ENCODE measurements at regions of chr12 and their contacts with region 1.

Region 1: GRCh38 chr12:49967042-49967776 is 5.5 kb downstream of the AQP5 start:
- DNase-seq: peak; percentile 85 to 92 (median 90)
- H3K4me3 ChIP-seq: peak overlapping the region in 6 of 7 experiments; percentile 33 to 72 (median 56)
- H3K27ac ChIP-seq: no peak overlapping the region
- H3K4me1 ChIP-seq: peaks cover 0 to 32% (median 28%) of the 10 kb centered on the region in 4 experiments
- H3K27me3 ChIP-seq: peaks cover 0 to 50% (median 17%) of the 10 kb centered on the region in 5 experiments

Region 2: GRCh38 chr12:49905718-49906314 is 61.4 kb before region 1 on chr12:
- CTCF ChIA-PET with region 1: interaction called, 11 read pairs
- POLR2A ChIA-PET with region 1: no interaction called
- DNase-seq: no peak
- H3K4me3 ChIP-seq: no peak overlapping the region
- H3K27ac ChIP-seq: no peak overlapping the region
- H3K4me1 ChIP-seq: peaks cover 0 to 12% (median 5%) of the 10 kb centered on the region in 4 experiments
- H3K27me3 ChIP-seq: peaks cover 0 to 36% (median 20%) of the 10 kb centered on the region in 5 experiments

Region 3: DNA sequence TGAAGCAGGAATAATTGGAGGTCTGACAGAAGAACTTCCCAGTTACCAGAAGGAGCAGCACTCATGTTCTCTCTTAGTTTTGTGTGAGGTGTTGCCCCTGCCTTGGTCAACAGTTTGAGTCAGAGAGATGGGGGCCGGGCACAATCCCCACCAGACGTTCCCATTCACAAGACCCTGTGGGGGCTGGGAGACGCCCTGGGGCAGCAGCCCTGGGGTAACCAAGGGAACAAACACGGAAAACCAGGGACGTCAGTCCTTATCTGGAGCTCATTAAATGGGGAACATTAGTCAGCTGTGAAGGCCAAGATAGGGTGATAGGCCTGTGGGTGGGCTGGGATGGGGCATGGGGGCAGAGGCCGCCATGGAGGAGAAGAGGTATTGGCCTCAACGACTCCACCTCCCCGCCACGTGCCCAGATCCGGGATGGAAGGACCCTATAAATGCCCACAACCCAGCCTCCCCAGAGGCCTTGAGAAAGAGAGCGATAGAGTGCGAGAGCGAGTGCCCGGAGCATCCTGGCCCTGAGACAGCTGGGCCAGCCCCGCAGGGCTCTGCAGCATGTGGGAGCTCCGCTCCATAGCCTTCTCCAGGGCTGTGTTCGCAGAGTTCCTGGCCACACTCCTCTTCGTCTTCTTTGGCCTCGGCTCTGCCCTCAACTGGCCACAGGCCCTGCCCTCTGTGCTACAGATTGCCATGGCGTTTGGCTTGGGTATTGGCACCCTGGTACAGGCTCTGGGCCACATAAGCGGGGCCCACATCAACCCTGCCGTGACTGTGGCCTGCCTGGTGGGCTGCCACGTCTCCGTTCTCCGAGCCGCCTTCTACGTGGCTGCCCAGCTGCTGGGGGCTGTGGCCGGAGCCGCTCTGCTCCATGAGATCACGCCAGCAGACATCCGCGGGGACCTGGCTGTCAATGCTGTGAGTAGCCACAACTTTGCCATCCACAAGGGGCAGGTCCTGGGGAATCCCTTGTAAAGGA is 16.6 kb before region 1 on chr12 and contains the start of gene AQP2:
- CTCF ChIA-PET with region 1: interaction called, 44 read pairs
- POLR2A ChIA-PET with region 1: no interaction called
- DNase-seq: no peak
- H3K4me3 ChIP-seq: no peak within 1 kb of the TSS
- H3K27ac ChIP-seq: no peak within 1 kb of the TSS
- H3K4me1 ChIP-seq: peaks cover 0 to 10% (median 7%) of the 10 kb centered on the region in 4 experiments
- H3K27me3 ChIP-seq: peaks cover 0 to 97% (median 54%) of the 10 kb centered on the region in 5 experiments

Region 4: DNA sequence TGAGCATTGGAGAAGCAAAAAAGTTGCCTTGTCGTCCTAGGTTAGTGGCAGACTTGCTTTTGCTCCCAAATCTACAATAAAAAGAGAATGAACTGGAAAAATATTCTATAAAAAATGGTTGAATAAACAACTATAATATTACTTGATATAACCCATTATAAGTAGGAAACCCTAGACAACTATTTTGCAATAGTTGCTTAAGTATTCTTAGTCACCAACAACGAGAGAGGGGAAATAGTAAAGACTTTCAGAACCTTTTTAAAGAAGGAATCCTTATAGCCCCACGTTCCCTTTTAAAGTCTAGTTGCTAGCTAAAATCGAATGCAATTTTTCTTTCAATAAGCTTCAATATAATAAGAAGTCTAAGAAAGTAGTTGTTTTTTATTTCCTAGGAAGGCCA is 23.1 kb after region 1 on chr12:
- CTCF ChIA-PET with region 1: interaction called, 139 read pairs
- POLR2A ChIA-PET with region 1: no interaction called
- DNase-seq: no peak
- H3K4me3 ChIP-seq: no peak overlapping the region
- H3K27ac ChIP-seq: no peak overlapping the region
- H3K4me1 ChIP-seq: no peaks in the 10 kb centered on the region
- H3K27me3 ChIP-seq: no peaks in the 10 kb centered on the region

Region 5: GRCh38 chr12:50017641-50018040 is 50.4 kb after region 1 on chr12:
- CTCF ChIA-PET with region 1: interaction called, 20 read pairs
- POLR2A ChIA-PET with region 1: no interaction called
- DNase-seq: no peak
- H3K4me3 ChIP-seq: no peak overlapping the region
- H3K27ac ChIP-seq: no peak overlapping the region
- H3K4me1 ChIP-seq: peaks cover 0 to 4% (median 0%) of the 10 kb centered on the region in 4 experiments
- H3K27me3 ChIP-seq: no peaks in the 10 kb centered on the region

Region 6: DNA sequence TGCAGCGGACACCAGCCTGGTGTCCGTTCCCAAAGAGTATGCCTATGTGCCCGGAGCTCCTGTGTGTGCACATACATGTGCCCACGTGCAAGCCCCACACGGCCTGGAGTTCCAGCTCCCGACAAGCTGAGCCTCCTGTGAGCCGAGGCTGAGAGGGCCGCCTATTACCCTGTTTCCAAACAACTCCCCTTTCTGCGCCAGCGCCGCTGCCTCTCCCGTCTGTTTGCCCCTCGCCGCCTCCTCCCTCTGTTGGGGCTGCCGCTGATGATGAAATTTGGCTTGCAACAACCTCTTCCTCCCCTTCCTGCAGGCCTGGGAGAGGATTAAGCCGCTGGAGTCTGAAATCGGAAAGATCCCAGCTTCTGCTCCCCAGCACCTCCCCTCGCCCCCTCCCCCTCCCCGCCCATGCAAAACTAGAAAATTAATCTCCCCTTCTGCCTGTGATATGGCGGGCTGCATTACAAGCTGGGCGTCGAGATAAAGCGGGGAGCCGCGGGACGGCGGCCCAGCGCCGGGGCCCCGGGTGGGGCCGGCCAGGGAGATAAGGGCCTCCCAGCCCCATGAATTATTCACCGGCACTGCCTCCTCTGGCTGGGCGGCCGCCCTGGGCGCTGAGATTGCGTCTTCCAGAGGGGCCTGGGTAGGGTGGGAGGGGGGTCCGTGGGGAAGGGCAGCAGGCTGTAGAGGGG is 83.3 kb after region 1 on chr12:
- CTCF ChIA-PET with region 1: interaction called, 72 read pairs
- POLR2A ChIA-PET with region 1: interaction called, 3 read pairs
- DNase-seq: peak; percentile 89 to 96 (median 93)
- H3K4me3 ChIP-seq: peak overlapping the region in 4 of 7 experiments; percentile 44 to 74 (median 62)
- H3K27ac ChIP-seq: peak overlapping the region in 1 of 2 experiments; percentile 34
- H3K4me1 ChIP-seq: peaks cover 2 to 29% (median 26%) of the 10 kb centered on the region in 4 experiments
- H3K27me3 ChIP-seq: peaks cover 0 to 24% (median 0%) of the 10 kb centered on the region in 5 experiments

Region 7: GRCh38 chr12:50074936-50075807 is 108.0 kb after region 1 on chr12:
- CTCF ChIA-PET with region 1: interaction called, 209 read pairs
- POLR2A ChIA-PET with region 1: no interaction called
- DNase-seq: peak; percentile 71 to 79 (median 72)
- H3K4me3 ChIP-seq: no peak overlapping the region
- H3K27ac ChIP-seq: no peak overlapping the region
- H3K4me1 ChIP-seq: peaks cover 0 to 19% (median 0%) of the 10 kb centered on the region in 4 experiments
- H3K27me3 ChIP-seq: peaks cover 0 to 6% (median 3%) of the 10 kb centered on the region in 5 experiments

Region 8: DNA sequence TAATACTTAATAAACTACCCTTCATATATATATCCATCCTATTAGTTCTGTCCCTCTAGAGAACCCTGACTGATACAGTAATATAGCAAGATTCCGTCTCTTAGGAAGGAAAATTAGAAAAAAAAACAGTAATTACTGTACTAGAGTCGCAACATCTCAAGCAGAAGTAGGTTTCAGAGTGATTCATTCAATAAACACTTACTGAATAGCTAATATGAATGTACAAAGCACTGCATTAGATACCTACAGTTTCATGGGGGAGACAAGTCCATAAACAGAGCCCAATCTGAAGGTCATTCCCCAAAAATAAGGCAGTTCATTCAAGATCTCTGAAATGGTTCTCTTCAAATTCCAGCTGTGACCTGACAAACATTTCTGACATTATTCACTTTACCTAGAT is 190.1 kb after region 1 on chr12:
- CTCF ChIA-PET with region 1: no interaction called
- POLR2A ChIA-PET with region 1: no interaction called
- DNase-seq: no peak
- H3K4me3 ChIP-seq: no peak overlapping the region
- H3K27ac ChIP-seq: no peak overlapping the region
- H3K4me1 ChIP-seq: peaks cover 0 to 3% (median 0%) of the 10 kb centered on the region in 4 experiments
- H3K27me3 ChIP-seq: no peaks in the 10 kb centered on the region

Region 9: DNA sequence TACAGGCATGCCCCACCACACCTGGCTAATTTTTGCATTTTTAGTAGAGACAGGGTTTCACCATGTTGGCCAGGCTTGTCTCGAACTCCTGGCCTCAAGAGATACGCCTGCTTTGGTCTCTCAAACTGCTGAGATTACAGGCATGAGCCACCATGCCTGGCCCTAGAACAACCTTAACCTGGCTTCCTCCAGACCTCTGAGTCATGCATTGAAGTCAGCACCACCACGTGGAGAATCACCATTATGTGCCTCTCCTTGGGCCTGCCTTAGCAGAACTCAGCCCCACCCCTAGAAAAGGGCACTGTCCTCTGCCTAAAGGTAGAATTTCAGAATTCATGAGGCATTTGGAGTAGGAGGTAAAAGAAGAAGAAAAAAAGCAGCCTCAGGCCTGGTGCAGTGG is 267.1 kb after region 1 on chr12:
- CTCF ChIA-PET with region 1: no interaction called
- POLR2A ChIA-PET with region 1: no interaction called
- DNase-seq: no peak
- H3K4me3 ChIP-seq: no peak overlapping the region
- H3K27ac ChIP-seq: no peak overlapping the region
- H3K4me1 ChIP-seq: peaks cover 0 to 3% (median 0%) of the 10 kb centered on the region in 4 experiments
- H3K27me3 ChIP-seq: no peaks in the 10 kb centered on the region

Measured in common myeloid progenitor, CD34-positive (primary cell).